H1 (cell line): ENCODE measurements at regions of chr3 and their contacts with region 1.

Region 1: GRCh38 chr3:172167892-172168648 is 128.7 kb downstream of the FNDC3B start:
- DNase-seq: no peak
- H3K4me3 ChIP-seq: no peak overlapping the region
- H3K27ac ChIP-seq: no peak overlapping the region
- H3K4me1 ChIP-seq: peaks cover 6 to 20% (median 17%) of the 10 kb centered on the region in 4 experiments; a peak in 5 of 7 replicates
- H3K27me3 ChIP-seq: no peaks in the 10 kb centered on the region
- CTCF ChIP-seq: no peak
- EP300 ChIP-seq: no peak
- POLR2A ChIP-seq: no peak
- RAD21 ChIP-seq: no peak

Region 2: DNA sequence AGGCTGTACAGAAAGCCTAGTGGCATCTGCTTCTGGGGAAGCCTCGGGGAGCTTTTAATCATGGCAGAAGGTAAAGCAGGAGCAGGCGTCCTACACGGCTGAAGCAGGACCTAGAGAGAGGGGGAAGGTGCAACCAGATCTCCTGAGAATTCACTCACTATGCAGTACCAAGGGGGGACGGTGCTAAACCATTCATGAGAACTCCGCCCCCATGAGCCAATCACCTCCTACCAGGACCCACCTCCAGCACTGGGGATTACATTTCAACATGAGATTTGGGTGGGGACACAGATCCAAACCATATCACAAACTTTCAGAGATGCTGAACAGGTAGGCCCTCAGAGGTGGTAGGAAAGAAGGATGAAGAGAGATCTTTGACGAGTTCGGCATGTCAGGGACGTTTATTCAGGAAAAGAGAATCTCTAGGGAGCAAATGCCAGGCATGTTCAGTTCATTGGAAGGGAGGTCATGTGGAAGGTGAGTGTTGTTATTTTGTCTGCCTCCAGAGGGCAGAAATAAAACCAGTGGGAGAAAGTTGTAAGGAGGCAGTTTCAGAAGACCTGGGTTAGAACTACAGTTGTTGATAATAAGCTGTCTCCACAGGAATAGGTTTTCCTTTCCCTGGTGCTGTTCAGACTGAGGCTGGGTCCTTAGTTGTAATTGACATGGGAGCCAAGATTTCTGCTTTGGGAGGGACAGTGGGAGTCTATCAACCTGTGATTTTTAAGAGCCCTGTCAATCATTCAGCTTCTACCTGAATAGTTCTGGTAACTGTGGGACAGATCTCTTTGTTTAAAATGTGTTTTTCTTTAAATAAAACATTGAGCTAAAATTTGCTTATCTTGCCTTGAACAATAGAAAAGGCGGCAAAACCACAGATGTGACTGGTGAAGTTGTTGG is 133.0 kb before region 1 on chr3:
- CTCF ChIA-PET with region 1: interaction called, 11 read pairs
- POLR2A ChIA-PET with region 1: no interaction called
- DNase-seq: peak in 1 of 2 experiments; percentile 58
- H3K4me3 ChIP-seq: no peak overlapping the region
- H3K27ac ChIP-seq: no peak overlapping the region
- H3K4me1 ChIP-seq: peaks cover 0 to 3% (median under 1%) of the 10 kb centered on the region in 4 experiments; a peak in 1 of 7 replicates
- H3K27me3 ChIP-seq: no peaks in the 10 kb centered on the region
- CTCF ChIP-seq: peak in 2 of 3 experiments; percentile 47 to 60; a peak in 3 of 4 replicates
- EP300 ChIP-seq: no peak
- POLR2A ChIP-seq: no peak
- RAD21 ChIP-seq: peak; percentile 44 to 58

Region 3: GRCh38 chr3:172129870-172130683 is 38.0 kb before region 1 on chr3:
- CTCF ChIA-PET with region 1: no interaction called
- POLR2A ChIA-PET with region 1: no interaction called
- DNase-seq: no peak
- H3K4me3 ChIP-seq: no peak overlapping the region
- H3K27ac ChIP-seq: no peak overlapping the region
- H3K4me1 ChIP-seq: peaks cover 0 to 6% (median 4%) of the 10 kb centered on the region in 4 experiments; a peak in 6 of 7 replicates
- H3K27me3 ChIP-seq: no peaks in the 10 kb centered on the region
- CTCF ChIP-seq: no peak
- EP300 ChIP-seq: no peak
- POLR2A ChIP-seq: no peak
- RAD21 ChIP-seq: no peak

Region 4: GRCh38 chr3:172153335-172153861 is 14.7 kb before region 1 on chr3:
- CTCF ChIA-PET with region 1: interaction called, 15 read pairs
- POLR2A ChIA-PET with region 1: no interaction called
- DNase-seq: no peak
- H3K4me3 ChIP-seq: no peak overlapping the region
- H3K27ac ChIP-seq: no peak overlapping the region
- H3K4me1 ChIP-seq: peaks cover 11 to 33% (median 30%) of the 10 kb centered on the region in 4 experiments
- H3K27me3 ChIP-seq: no peaks in the 10 kb centered on the region
- CTCF ChIP-seq: no peak
- EP300 ChIP-seq: no peak
- POLR2A ChIP-seq: no peak
- RAD21 ChIP-seq: no peak

Region 5: GRCh38 chr3:172181932-172182586 is 14.0 kb after region 1 on chr3:
- CTCF ChIA-PET with region 1: interaction called, 11 read pairs
- POLR2A ChIA-PET with region 1: interaction called, 3 read pairs
- DNase-seq: no peak
- H3K4me3 ChIP-seq: no peak overlapping the region
- H3K27ac ChIP-seq: no peak overlapping the region
- H3K4me1 ChIP-seq: peaks cover 5 to 9% (median 6%) of the 10 kb centered on the region in 4 experiments; a peak in 5 of 7 replicates
- H3K27me3 ChIP-seq: no peaks in the 10 kb centered on the region
- CTCF ChIP-seq: no peak
- EP300 ChIP-seq: no peak
- POLR2A ChIP-seq: no peak
- RAD21 ChIP-seq: no peak

Region 6: DNA sequence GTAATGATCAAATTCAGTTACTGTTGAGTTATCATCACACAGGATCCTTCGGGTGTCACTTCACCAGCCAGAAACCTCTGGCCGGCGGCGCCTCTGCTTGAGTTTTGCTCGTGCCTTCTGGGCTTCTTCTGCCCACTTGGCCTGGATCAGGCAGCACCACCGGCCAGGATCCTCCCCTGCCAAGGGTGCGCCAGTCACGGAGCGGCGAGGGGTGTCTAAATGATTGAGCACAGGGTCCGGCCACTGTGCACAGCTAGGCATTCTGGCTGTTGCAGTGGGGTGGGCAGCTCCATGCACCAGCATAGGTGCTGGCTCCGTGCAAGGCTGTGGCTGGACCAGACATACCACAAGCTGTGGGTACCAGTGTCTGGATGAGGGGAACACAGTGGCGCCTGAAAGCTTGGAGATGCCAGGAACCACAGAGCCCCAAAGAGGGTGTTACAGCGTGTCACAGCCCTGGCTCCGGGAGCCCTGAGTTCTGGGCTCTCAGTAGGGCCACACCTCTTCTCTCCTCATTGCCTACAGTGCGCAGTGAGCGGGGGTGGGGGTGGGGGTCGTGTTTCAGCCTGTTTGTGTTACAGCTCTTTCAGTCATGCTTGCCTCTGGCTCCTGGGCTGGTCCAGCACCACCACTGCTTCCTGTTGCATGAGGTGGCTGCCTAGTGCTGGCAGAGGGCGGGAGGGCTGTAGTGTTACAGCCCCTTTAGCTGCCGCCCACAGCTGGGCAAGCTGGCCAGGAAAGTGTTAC is 40.7 kb after region 1 on chr3:
- CTCF ChIA-PET with region 1: interaction called, 12 read pairs
- POLR2A ChIA-PET with region 1: interaction called, 3 read pairs
- DNase-seq: peak in 1 of 2 experiments; percentile 19
- H3K4me3 ChIP-seq: no peak overlapping the region
- H3K27ac ChIP-seq: no peak overlapping the region
- H3K4me1 ChIP-seq: peaks cover 4 to 15% (median 12%) of the 10 kb centered on the region in 4 experiments
- H3K27me3 ChIP-seq: no peaks in the 10 kb centered on the region
- CTCF ChIP-seq: no peak
- EP300 ChIP-seq: no peak
- POLR2A ChIP-seq: no peak
- RAD21 ChIP-seq: no peak; a peak in 1 of 4 replicates

Region 7: DNA sequence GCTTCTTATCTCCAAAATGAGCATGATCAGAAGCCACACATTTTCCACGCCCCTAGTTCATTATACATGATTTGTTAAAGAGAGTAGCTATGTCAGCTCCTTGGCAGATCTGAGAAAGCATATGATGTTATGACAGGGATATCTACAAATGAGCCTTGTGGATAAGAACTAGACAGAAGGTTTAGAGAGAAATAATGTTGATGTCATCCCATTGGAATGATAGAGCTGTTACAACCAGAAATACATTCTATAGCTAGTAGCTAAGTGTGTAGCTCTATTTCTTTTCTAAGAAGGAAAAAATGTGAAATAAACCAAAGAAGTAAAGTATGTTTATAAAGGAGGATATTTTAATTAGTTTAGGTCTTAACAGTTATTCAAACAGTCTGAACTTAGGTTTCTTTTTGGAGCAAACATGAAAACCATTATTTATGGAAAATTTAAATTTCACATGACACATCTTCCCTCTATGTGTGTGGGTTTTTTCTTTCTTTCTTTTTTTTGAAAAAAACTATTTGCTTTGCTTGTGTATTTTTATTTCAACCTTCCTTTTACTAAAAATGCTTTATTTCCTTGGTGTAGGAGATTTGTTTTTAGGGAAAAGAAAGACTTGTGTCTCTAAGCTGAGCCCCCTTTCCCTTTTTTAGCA is 112.5 kb after region 1 on chr3:
- CTCF ChIA-PET with region 1: no interaction called
- POLR2A ChIA-PET with region 1: no interaction called
- DNase-seq: no peak
- H3K4me3 ChIP-seq: no peak overlapping the region
- H3K27ac ChIP-seq: no peak overlapping the region
- H3K4me1 ChIP-seq: no peaks in the 10 kb centered on the region
- H3K27me3 ChIP-seq: no peaks in the 10 kb centered on the region
- CTCF ChIP-seq: no peak
- EP300 ChIP-seq: no peak
- POLR2A ChIP-seq: no peak
- RAD21 ChIP-seq: no peak